Cardiac septum (tissue), 1 donor: ENCODE measurements at regions of chr22 and their contacts with region 1.

Region 1: DNA sequence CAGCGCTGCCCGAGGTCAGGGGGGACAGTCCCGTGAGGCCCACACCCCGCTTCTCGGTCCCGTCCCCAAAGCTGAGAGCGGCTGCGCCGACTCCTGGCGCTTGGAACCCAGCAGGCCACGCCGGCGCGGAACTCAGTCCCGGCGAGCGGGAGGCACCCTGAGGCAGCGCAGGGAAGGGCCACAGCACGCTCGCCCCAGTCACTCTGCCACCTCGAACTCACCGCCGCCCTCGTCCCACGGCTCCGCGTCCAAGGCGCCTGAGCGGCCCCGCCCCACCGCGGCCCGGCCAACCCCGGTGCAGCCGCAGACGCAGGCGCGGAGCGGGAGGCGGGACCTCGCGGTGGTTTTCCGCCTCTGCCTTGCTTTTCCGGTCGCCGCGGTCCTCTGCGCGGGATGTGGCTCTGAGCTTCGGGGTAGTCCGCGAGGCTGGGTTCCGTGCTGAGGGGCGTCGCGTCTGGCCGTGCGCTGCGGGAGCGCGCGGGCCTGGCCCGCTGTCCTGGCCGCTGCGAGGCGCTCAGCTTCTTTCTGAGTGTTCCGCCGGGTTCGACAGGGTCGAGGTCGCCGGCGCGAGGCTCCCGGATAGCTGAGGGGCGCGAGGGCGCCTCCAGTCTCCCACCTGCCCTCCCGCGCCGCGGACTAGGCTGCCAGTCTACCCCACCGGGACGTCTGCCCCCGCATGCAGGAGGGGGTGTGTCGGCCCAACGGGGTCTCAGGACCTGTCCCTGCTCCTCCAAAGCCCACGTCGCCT is at the start of gene CDPF1:
- DNase-seq: peak; percentile 97
- total RNA-seq, gene CDPF1: 7.6 TPM

Region 2: DNA sequence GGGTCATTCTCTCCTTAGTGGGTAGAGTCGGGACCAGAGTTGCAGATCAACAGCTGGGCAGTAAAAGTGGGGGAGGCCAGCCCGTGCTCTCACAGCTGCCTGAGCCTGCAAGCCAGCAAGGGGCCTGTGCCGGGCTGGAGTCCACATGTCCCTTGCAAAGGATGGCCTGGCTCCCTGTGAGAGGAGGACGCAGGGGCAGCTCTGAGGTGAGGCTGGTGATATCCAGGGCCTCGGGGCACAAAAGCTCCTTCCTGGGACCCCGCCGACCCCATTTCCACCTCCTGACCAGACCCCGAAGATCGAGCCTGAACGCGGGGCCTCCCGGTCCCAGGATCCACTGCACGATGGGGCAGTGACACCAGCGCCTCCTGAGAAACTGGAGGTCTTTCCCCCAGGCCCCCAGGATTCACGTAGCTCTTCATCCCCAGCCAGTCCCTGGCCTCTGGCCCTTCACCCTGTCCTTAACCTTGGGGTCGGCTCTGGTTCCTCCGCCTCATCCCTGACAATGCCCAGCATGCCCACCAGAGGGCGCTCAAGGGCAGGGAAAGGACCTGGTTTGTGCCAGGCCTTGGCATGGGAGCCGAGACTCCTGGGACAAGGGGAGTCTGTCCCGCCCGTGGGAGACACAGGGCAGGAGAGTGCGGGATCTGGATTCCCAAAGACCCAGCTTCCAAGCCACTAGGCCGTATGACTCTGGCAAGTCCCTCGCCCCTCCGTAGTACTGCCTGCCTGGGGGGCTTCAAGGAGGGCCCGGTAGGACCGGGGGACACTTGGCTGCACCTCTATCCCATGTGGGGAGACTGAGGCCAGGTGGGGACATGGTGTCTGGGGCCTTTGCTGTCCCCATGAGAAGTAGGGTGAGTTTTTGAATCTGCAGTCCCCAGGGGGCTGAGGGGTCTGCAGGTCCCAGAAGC is 255.5 kb before region 1 on chr22:
- intact Hi-C with region 1: loop called (anchors 5 kb)
- DNase-seq: peak; percentile 93

Region 3: DNA sequence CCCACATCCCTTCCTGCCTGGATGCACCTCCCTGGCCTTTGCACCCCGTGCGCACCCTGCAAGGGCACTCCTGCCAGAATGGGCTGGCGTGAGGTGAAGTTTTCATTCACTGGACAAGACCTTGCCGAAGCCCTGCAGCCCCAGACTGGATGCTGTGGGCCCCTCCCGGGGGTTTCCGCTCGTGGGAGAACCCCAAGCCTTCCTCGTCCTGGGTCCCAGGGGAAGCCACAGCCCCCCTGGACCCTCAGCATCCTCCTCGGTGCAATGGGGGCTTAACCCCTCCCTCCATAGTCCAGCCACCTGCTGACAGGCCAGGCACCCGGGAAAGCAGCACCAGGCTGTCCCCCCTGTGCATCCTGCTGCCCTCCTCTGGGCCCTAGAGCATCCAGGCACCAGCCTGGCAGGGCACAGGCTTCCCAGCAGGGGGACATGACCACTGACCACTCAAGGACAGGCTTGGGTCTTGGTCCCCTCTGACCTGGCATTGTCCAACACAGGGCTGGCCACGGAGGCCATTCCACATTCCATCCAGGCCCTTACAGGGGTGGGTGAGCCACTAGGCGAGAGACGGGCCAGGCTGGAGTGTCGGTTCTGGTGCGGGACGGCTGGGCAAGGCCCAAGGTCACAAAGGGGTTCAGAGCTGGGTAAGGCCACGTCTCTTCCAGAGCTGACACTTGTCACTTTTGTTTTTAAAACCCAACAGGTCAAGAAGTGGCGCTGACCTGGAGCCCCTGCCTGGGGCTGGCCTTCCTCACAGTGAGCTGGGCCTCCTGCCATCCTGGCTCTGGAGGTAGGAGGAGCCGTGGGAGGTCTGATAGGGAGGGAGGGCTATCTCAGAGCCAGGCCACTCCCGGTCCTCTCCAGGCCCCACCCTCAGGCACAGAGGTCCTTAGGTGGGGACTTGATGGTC is 141.4 kb before region 1 on chr22:
- intact Hi-C with region 1: no loop called
- DNase-seq: no peak

Region 4: GRCh38 chr22:46122511-46122971 is 127.7 kb before region 1 on chr22:
- intact Hi-C with region 1: loop called (anchors 10 kb)
- DNase-seq: peak; percentile 88

Region 5: DNA sequence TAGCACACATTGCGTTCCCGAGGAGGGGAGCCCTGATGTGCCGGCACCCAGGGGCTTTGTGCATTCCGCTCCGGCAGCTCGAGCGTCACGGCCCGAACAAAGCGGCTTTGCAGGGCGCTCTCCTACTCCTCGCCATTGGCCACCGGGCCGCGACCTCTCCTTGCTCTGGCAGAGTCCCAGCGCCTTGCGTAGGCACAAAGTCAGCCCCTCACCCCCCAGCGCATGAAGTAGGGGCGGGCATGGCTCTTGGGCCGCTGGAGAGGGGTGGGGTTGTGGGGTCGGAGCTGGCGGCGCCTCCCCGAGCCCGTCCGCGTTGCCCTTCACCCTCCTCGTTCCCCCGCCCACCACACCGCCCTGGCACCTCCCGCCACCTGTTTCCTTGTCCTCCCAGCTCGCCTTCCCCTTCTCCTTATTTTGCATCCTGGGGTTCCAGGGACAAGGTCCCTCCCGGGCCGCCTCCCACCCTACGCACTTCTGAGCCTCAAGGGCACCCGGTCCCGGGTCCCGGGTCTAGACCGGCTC is 100.6 kb before region 1 on chr22:
- intact Hi-C with region 1: loop called (anchors 5 kb)
- DNase-seq: peak; percentile 80

Region 6: DNA sequence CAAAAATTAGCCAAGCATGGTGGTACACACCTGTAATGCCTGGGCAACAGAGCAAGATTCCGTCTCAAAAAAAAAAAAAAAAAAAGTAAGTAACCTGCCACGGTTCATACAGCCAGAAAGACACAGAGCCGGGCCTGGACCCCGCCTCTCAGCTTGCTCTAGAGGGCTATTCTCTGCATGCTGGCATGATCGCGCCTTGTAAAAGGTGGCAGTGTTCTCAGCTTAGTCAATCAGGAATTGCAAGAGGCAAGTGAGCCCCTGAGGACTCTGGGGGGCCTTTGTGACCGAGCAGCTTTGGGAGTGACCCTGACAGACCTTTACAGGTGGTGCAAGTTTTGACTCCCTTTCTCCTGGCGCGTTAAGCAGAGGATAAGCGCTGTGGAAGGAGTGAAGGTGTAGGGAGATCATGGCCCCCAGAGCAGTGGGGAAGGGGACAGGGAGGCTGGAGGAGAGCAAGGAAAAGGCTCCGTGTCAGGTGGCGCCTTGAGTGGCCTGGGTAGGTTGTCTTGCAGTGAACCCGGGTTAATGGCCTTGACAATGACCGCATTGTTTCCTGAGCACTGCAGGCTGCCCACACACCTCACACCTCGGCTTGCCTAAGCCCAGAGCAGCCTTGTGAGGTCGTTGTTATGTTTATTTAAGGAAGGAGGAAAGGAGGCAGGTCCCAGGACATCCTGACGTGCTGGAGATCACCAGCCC is 49.0 kb before region 1 on chr22:
- intact Hi-C with region 1: no loop called
- DNase-seq: no peak

Region 7: DNA sequence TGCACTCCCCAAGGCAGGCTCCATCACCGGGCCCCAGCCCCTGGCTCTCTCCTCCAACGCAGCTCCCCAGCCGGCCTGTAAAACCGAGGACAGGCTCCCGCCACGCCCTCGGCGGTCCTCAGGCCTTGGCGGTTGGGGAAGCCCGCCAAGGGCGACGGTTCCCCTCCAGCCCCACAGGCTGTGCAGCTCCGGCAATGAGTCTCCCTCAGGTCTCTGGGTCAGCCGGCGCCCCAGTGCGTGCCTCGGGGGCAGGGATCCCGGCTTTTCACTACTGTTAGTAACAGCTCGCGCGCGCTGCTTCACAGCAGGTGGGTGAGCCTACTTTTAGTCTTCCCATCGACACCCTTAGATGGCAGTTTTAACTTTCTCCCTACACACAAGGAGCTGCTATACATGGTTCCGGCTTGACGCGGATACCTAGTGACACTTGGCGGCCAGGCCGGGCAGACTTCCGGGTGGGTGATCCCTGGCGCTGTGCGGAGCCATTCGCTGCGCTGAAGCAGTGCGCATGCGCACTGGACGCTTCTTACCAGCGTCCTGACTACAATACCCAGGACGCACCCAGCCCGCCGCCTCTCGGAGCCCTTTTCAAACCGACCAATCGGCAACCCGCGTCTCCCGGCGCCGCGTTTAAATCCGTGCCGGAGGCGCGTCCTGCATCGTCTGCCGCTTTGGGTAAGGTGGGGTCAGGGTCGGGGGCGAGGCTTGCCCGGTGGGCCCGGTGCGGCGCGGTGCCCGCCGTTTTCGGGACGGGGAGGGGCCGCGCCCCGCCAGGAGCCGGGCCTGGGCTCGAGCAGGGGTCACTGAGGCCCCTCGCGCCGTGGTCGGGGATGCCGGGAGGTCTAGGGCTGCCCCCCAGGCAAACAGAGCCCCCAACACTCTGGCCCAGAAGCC is 46.3 kb after region 1 on chr22 and contains the start of gene GTSE1:
- intact Hi-C with region 1: loop called (anchors 2 kb)
- DNase-seq: peak; percentile 98
- total RNA-seq, gene GTSE1: 0.32 TPM